CD4-positive, alpha-beta memory T cell (primary cell): ENCODE measurements at regions of chr6 and their contacts with region 1.

Region 1: GRCh38 chr6:28080631-28081485 is 490 bp downstream of the ZNF165 start:
- DNase-seq: peak; percentile 92 to 94 (median 93)
- H3K4me3 ChIP-seq: peak overlapping the region; percentile 90 to 94
- H3K4me3 Mint-ChIP-seq: peak overlapping the region; percentile 90 to 99 (median 98)
- H3K27ac ChIP-seq: peak overlapping the region; percentile 92
- H3K27ac Mint-ChIP-seq: peak overlapping the region; percentile 97 to 100 (median 99)
- H3K4me1 ChIP-seq: peaks cover 12% of the 10 kb centered on the region
- H3K4me1 Mint-ChIP-seq: peaks cover 9 to 22% (median 14%) of the 10 kb centered on the region in 4 donors
- H3K27me3 ChIP-seq: no peaks in the 10 kb centered on the region
- H3K27me3 Mint-ChIP-seq: no peaks in the 10 kb centered on the region

Region 2: DNA sequence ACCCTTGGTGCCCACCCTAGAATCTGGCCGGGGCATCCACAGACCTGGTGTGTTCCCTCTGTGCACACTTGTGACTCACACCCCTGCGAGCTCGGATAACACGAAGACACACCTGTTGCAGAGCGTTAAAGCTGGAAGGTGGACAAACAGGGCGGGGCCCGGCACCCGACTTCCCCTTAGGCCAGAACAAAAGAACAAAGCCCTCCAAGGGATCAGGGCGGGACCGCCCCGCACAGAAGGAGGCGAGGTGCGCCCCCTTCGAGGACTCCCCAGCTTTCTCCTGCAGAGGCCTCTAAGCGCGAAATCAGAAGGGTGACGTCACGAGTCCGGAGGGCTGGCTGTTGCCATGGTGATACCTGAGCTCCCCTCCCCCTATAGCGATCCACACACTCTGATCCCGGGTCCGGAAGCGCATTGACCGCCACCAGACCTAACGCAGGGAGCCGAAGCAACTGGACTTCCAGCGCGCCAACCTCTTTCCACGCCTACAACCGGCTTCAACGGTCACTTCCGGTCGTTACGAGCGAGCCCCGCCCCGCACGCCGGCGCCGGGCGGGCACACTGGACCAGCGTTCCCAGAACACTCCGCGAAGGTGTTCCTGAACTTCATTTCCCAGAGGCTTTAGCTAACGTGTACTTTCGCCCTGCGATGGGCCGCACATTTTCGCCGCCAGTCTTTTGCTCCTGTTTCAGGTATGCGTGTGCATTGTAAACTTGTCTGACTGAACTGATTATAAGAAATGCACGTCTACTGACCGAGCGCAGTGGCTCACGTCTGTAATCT is 608.0 kb before region 1 on chr6 and contains the start of gene ZNF184:
- CTCF ChIA-PET with region 1: no interaction called
- POLR2A ChIA-PET with region 1: no interaction called
- intact Hi-C with region 1: loop called (anchors 5 kb)
- DNase-seq: peak; percentile 86 to 90 (median 89)
- H3K4me3 ChIP-seq: peak within 1 kb of the TSS; percentile 70 to 98
- H3K4me3 Mint-ChIP-seq: peak within 1 kb of the TSS; percentile 92 to 99 (median 96)
- H3K27ac ChIP-seq: peak within 1 kb of the TSS; percentile 92
- H3K27ac Mint-ChIP-seq: peak within 1 kb of the TSS; percentile 93 to 99 (median 96)
- H3K4me1 ChIP-seq: peaks cover 56% of the 10 kb centered on the region
- H3K4me1 Mint-ChIP-seq: peaks cover 33 to 65% (median 43%) of the 10 kb centered on the region in 4 donors
- H3K27me3 ChIP-seq: no peaks in the 10 kb centered on the region
- H3K27me3 Mint-ChIP-seq: no peaks in the 10 kb centered on the region
- total RNA-seq, gene ZNF184: 15.2 to 17.4 TPM

Region 3: DNA sequence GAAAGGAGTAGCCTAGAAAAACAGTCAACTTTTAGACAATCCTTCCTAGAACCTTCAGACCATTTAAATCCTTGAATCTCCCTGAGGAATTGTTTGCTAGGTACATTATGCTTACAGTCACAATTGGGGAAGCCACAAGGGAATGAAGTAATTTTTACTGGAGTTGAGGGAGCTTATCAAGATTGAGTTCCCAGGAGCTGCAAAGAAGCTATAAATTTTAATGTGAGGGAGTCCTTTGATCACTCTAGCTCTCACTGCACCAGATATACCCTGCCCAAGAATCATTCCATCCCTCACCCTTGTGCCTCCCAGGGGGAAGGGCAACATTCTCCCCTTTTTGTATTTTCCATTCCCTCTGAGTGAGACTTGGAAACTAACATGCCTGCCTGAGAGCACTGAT is 12.8 kb before region 1 on chr6:
- CTCF ChIA-PET with region 1: no interaction called
- POLR2A ChIA-PET with region 1: no interaction called
- intact Hi-C with region 1: no loop called
- DNase-seq: no peak
- H3K4me3 ChIP-seq: no peak overlapping the region
- H3K4me3 Mint-ChIP-seq: no peak overlapping the region
- H3K27ac ChIP-seq: no peak overlapping the region
- H3K27ac Mint-ChIP-seq: no peak overlapping the region
- H3K4me1 ChIP-seq: no peaks in the 10 kb centered on the region
- H3K4me1 Mint-ChIP-seq: no peaks in the 10 kb centered on the region
- H3K27me3 ChIP-seq: peaks cover 4% of the 10 kb centered on the region
- H3K27me3 Mint-ChIP-seq: peaks cover 29 to 37% of the 10 kb centered on the region in 2 donors

Region 4: GRCh38 chr6:28104392-28105244 is 23.8 kb after region 1 on chr6:
- CTCF ChIA-PET with region 1: interaction called, 5 read pairs
- POLR2A ChIA-PET with region 1: interaction called, 18 read pairs
- intact Hi-C with region 1: loop called (anchors 1 kb)
- DNase-seq: peak; percentile 79 to 83 (median 82)
- H3K4me3 ChIP-seq: peak overlapping the region; percentile 59 to 67
- H3K4me3 Mint-ChIP-seq: peak overlapping the region; percentile 85 to 96 (median 92)
- H3K27ac ChIP-seq: peak overlapping the region; percentile 72
- H3K27ac Mint-ChIP-seq: peak overlapping the region; percentile 80 to 97 (median 93)
- H3K4me1 ChIP-seq: peaks cover 13% of the 10 kb centered on the region
- H3K4me1 Mint-ChIP-seq: peaks cover 3 to 17% (median 11%) of the 10 kb centered on the region in 4 donors
- H3K27me3 ChIP-seq: no peaks in the 10 kb centered on the region
- H3K27me3 Mint-ChIP-seq: peaks cover 3 to 11% of the 10 kb centered on the region in 2 donors

Region 5: GRCh38 chr6:28266962-28267694 is 186.3 kb after region 1 on chr6 and contains the start of gene ZSCAN26:
- CTCF ChIA-PET with region 1: no interaction called
- POLR2A ChIA-PET with region 1: interaction called, 7 read pairs
- intact Hi-C with region 1: loop called (anchors 1 kb)
- DNase-seq: peak; percentile 86 to 90 (median 88)
- H3K4me3 ChIP-seq: peak within 1 kb of the TSS; percentile 90 to 94
- H3K4me3 Mint-ChIP-seq: peak within 1 kb of the TSS in 1 of 8 donors; percentile 12
- H3K27ac ChIP-seq: peak within 1 kb of the TSS; percentile 70
- H3K27ac Mint-ChIP-seq: no peak within 1 kb of the TSS
- H3K4me1 ChIP-seq: peaks cover 18% of the 10 kb centered on the region
- H3K4me1 Mint-ChIP-seq: peaks cover 4 to 15% (median 11%) of the 10 kb centered on the region in 4 donors
- H3K27me3 ChIP-seq: no peaks in the 10 kb centered on the region
- H3K27me3 Mint-ChIP-seq: peaks cover 0 to under 1% of the 10 kb centered on the region in 2 donors
- total RNA-seq, gene ZSCAN26: 23.3 to 26.5 TPM